ENCODE measurements at regions of chr4 and their contacts with region 1.

Region 1: GRCh38 chr4:155442267-155443105 is 65.7 kb upstream of the MAP9 start:
- DNase-seq: peak; percentile 90
- ATAC-seq: peak; percentile 80
- H3K4me3 ChIP-seq: peak overlapping the region; percentile 53
- H3K27ac ChIP-seq: peak overlapping the region; percentile 47
- H3K4me1 ChIP-seq: peaks cover 28% of the 10 kb centered on the region
- H3K27me3 ChIP-seq: no peaks in the 10 kb centered on the region
- CTCF ChIP-seq: peak; percentile 95

Region 2: GRCh38 chr4:155271557-155271956 is 170.9 kb before region 1 on chr4:
- CTCF ChIA-PET with region 1: no interaction called
- POLR2A ChIA-PET with region 1: no interaction called
- intact Hi-C with region 1: no loop called
- DNase-seq: no peak
- ATAC-seq: no peak
- H3K4me3 ChIP-seq: no peak overlapping the region
- H3K27ac ChIP-seq: no peak overlapping the region
- H3K4me1 ChIP-seq: no peaks in the 10 kb centered on the region
- H3K27me3 ChIP-seq: no peaks in the 10 kb centered on the region
- CTCF ChIP-seq: no peak

Region 3: DNA sequence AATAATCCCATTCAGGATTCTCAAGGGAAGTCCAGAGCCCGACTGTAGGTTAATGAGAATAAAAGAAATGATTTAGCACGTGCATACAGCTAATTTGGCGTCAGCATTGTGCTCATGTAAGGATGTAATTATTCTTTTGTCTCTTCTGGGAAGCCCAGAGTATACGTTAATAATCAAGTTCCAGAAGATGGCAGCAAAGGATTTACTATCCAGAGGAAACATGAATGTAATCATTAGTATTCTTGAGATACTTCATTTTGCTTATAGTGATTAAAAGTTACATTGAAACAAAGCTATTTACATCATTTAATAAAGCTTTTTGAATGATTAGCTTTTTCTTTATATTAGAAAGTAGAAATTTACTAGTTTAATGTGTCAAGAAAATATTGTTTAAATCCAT is 38.6 kb before region 1 on chr4:
- CTCF ChIA-PET with region 1: no interaction called
- POLR2A ChIA-PET with region 1: no interaction called
- intact Hi-C with region 1: loop called (anchors 1 kb)
- DNase-seq: peak; percentile 71
- ATAC-seq: peak; percentile 73
- H3K4me3 ChIP-seq: no peak overlapping the region
- H3K27ac ChIP-seq: no peak overlapping the region
- H3K4me1 ChIP-seq: peaks cover 7% of the 10 kb centered on the region
- H3K27me3 ChIP-seq: no peaks in the 10 kb centered on the region
- CTCF ChIP-seq: peak; percentile 68

Region 4: DNA sequence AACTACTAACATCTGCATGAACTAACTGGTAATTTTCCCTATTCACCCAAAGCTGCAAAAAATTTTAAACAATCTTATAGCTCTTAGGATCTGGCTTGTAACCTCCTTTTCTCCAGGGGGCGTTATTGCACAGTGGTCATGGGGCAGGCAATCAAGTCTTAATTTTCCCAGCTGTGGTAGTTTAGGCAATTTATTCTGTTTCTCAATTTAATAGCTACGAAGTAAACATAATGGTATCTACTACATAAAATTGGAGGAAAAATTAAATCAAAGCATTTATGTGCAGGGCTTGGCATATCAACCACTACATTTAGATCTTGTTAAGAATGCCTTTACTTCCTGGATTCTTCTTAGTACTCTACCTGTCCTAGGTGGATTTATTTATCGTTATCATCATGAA is 86.8 kb after region 1 on chr4:
- CTCF ChIA-PET with region 1: no interaction called
- POLR2A ChIA-PET with region 1: no interaction called
- intact Hi-C with region 1: loop called (anchors 1 kb)
- DNase-seq: peak; percentile 44
- ATAC-seq: no peak
- H3K4me3 ChIP-seq: peak overlapping the region; percentile 14; the same call in 1 of the 2 replicates
- H3K27ac ChIP-seq: peak overlapping the region; percentile 96
- H3K4me1 ChIP-seq: peaks cover 38% of the 10 kb centered on the region
- H3K27me3 ChIP-seq: no peaks in the 10 kb centered on the region
- CTCF ChIP-seq: peak; percentile 68

Region 5: GRCh38 chr4:155667568-155668511 is 225.4 kb after region 1 on chr4:
- CTCF ChIA-PET with region 1: no interaction called
- POLR2A ChIA-PET with region 1: interaction called, 4 read pairs
- intact Hi-C with region 1: loop called (anchors 2 kb)
- DNase-seq: peak; percentile 45
- ATAC-seq: peak; percentile 52
- H3K4me3 ChIP-seq: peak overlapping the region; percentile 87
- H3K27ac ChIP-seq: peak overlapping the region; percentile 66
- H3K4me1 ChIP-seq: peaks cover 27% of the 10 kb centered on the region
- H3K27me3 ChIP-seq: no peaks in the 10 kb centered on the region
- CTCF ChIP-seq: no peak

Region 6: DNA sequence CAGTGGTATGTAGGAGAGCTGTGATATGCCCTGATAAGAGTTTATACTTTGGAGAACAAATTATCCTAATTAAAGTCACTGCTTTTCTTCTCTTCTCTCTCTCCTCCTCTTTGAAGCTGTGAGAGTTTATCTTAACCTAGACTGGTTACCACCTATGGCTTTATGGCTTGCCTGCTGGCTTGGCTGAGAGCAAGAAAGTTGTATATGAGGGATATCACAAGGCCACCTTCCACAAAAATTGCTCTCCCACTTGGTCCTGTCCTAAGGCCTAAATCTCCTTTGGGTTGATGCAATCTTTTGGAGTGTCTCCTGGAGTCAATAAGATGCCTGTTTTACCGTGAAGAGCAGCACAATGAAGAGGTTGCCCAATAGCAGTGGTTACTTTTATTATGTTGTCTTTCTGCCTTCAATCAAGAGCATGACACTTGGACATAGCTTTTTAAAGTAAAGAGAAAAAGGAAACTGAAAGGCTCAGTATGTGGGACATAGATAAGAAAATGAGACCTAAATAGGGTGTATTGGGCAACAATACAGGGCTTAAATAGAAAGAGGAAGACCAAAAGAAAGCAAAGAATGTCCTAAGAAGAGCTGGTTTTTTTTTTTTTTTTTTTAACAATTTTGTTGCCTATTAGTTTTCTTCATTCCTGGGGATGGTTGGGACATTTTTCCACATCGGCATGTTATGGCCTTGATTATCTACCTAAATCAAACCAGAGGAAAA is 233.4 kb after region 1 on chr4:
- CTCF ChIA-PET with region 1: no interaction called
- POLR2A ChIA-PET with region 1: no interaction called
- intact Hi-C with region 1: loop called (anchors 2 kb)
- DNase-seq: peak; percentile 46
- ATAC-seq: no peak
- H3K4me3 ChIP-seq: no peak overlapping the region
- H3K27ac ChIP-seq: peak overlapping the region; percentile 23; the same call in 1 of the 2 replicates
- H3K4me1 ChIP-seq: peaks cover 48% of the 10 kb centered on the region
- H3K27me3 ChIP-seq: no peaks in the 10 kb centered on the region
- CTCF ChIP-seq: no peak

Region 7: GRCh38 chr4:155787113-155787710 is 344.7 kb after region 1 on chr4:
- CTCF ChIA-PET with region 1: interaction called, 3 read pairs
- POLR2A ChIA-PET with region 1: no interaction called
- intact Hi-C with region 1: loop called (anchors 1 kb)
- DNase-seq: peak; percentile 74
- ATAC-seq: peak; percentile 77
- H3K4me3 ChIP-seq: no peak overlapping the region
- H3K27ac ChIP-seq: no peak overlapping the region
- H3K4me1 ChIP-seq: peaks cover 3% of the 10 kb centered on the region
- H3K27me3 ChIP-seq: no peaks in the 10 kb centered on the region
- CTCF ChIP-seq: peak; percentile 89

Region 8: GRCh38 chr4:155953151-155954114 is 510.9 kb after region 1 on chr4 and contains the start of gene CTSO:
- CTCF ChIA-PET with region 1: no interaction called
- POLR2A ChIA-PET with region 1: no interaction called
- intact Hi-C with region 1: loop called (anchors 2 kb)
- DNase-seq: peak; percentile 82
- ATAC-seq: peak; percentile 91
- H3K4me3 ChIP-seq: peak within 1 kb of the TSS; percentile 89
- H3K27ac ChIP-seq: peak within 1 kb of the TSS; percentile 93
- H3K4me1 ChIP-seq: peaks cover 11% of the 10 kb centered on the region
- H3K27me3 ChIP-seq: no peaks in the 10 kb centered on the region
- CTCF ChIP-seq: peak; percentile 73
- total RNA-seq, gene CTSO: 1.6 and 2.8 TPM in 2 replicates

Region 9: DNA sequence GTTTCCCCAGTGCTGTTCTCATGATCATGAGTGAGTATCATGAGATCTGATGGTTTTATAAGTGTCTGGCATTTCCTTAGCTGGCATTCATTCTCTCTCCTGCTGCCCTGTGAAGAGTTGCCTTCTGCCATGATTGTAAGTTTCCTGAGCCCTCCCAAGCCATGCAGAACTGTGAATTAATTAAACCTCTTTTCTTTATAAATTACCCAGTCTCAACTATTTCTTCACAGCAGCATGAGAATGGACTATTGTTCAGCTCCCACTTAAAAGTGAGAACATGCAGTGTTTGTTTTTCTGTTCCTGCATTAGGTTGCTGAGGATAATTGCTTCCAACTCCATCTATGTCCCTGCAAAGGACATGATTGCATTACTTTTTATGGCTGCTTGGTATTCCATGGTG is 822.9 kb after region 1 on chr4:
- CTCF ChIA-PET with region 1: no interaction called
- POLR2A ChIA-PET with region 1: no interaction called
- intact Hi-C with region 1: no loop called
- DNase-seq: no peak
- ATAC-seq: no peak
- H3K4me3 ChIP-seq: no peak overlapping the region
- H3K27ac ChIP-seq: no peak overlapping the region
- H3K4me1 ChIP-seq: peaks cover 8% of the 10 kb centered on the region; the same call in 1 of the 2 replicates
- H3K27me3 ChIP-seq: no peaks in the 10 kb centered on the region
- CTCF ChIP-seq: no peak

Measured in PC-3 (cell line).